ENCODE measurements at regions of chr19 and their contacts with region 1.

Region 1: GRCh38 chr19:15748239-15748638 is 10.5 kb downstream of the OR10H3 start:
- DNase-seq: no peak
- H3K4me3 ChIP-seq: no peak overlapping the region
- H3K27ac ChIP-seq: no peak overlapping the region
- H3K4me1 ChIP-seq: no peaks in the 10 kb centered on the region
- H3K27me3 ChIP-seq: peaks cover 52% of the 10 kb centered on the region
- CTCF ChIP-seq: no peak
- EP300 ChIP-seq: no peak
- POLR2A ChIP-seq: no peak

Region 2: DNA sequence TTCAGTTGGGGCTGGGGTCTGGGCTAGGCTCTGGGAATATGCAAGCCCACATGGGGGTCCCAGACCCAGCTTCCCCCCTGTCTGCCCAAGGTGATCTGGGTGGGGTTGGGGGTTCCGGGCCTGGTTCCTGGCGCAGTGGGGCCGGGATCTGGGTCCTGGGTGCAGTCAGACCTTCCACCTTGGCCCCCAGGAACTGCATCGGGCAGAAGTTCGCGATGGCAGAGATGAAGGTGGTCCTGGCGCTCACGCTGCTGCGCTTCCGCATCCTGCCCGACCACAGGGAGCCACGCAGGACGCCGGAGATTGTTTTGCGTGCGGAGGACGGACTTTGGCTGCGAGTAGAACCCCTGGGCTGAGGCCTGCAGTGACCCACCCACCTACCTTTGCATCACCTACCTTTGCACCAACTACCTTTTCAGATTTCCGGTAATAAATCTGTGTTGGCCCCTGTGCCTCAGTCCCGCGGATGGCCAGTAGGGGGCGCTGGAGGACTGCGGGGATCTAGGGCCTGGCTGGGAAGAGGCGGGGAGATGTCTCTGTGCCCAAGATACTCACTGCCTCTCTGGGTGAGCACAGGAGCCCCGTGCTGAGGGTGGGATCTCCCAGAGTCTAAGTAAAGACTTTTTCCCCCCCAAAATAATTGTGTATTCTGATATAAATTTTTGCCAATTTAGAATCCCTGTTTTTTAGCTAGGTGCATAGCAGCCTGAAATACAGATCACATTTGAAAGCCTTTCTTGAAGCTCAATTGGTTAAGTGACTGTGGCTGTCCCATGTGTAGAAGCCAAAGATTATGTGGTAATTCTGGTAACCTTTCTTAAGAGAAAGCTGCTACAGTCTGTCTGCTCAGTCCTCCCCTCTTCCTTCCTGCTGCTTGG is 119.0 kb before region 1 on chr19:
- in situ Hi-C with region 1: no loop called
- intact Hi-C with region 1: no loop called
- DNase-seq: peak; percentile 92
- H3K4me3 ChIP-seq: peak overlapping the region in 1 of 4 donors; percentile 6
- H3K27ac ChIP-seq: no peak overlapping the region
- H3K4me1 ChIP-seq: peaks cover 0 to 4% (median 0%) of the 10 kb centered on the region in 4 donors
- H3K27me3 ChIP-seq: peaks cover 4% of the 10 kb centered on the region
- CTCF ChIP-seq: peak; percentile 97 to 99 (median 99)
- EP300 ChIP-seq: no peak
- POLR2A ChIP-seq: no peak

Region 3: DNA sequence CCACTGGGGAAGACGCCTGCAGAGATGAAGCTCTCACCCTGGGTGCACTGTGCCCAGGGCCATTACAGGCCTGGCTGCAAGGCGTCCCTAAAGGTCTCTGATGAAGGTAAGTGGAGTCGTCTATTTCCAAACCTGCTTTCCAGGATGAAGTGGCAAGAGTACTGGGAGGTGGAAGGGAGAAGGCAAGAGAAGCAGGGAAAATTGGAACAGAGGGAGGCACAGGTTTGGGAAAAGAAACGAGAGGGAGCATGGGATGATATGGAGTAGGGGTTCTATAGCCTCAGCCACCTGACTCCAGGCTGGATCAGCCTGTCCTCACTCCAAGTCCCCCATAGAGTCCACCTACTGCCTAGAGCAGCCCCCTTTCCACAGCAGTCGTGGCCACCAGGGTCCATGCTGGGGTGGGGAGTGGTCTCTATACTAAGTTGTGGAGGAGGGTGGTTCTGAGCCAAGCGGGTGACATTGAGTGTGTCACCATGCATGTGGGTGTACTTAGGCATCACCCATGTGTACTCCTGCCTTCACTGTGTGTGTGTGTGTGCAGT is 39.4 kb after region 1 on chr19 and contains the start of gene OR10H5:
- in situ Hi-C with region 1: no loop called
- intact Hi-C with region 1: loop called (anchors 1 kb)
- DNase-seq: no peak
- H3K4me3 ChIP-seq: no peak within 1 kb of the TSS
- H3K27ac ChIP-seq: peak within 1 kb of the TSS in 3 of 4 donors; percentile 5 to 21 (median 8)
- H3K4me1 ChIP-seq: peaks cover 0 to 15% (median 1%) of the 10 kb centered on the region in 4 donors
- H3K27me3 ChIP-seq: no peaks in the 10 kb centered on the region
- CTCF ChIP-seq: no peak
- EP300 ChIP-seq: no peak
- POLR2A ChIP-seq: no peak
- total RNA-seq, gene OR10H5: not detected

Region 4: DNA sequence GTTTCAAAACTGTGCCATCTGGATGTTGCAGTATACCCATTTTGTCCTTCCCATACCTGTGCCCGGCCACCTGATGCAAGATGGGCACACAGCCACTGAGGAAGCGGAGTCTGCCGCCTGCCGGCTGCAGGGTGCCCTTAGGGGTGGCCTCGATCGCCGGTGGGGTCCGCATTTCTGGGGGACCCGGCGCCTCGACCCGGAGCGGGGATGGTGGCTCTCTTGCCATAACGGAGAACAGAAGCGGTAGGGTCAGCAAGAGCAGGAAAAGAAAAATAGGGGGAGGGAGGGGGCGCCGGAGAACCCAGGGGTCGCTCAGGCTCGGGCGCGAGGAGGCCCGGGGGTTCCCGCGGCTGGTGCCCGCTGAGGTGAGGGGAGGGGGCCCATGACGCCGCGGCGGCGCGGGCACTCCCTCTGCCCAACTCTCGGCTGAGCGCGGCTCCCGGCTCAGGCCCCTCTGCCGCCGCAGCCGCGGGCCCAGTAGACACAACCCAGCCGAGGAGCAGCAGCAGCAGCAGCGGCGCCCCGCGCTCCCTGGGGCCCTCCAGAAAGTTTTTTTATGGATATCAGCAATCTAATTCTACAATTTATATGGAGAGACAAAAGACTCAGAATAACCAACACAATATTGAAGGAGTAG is 163.5 kb after region 1 on chr19:
- in situ Hi-C with region 1: no loop called
- intact Hi-C with region 1: no loop called
- DNase-seq: no peak
- H3K4me3 ChIP-seq: no peak overlapping the region
- H3K27ac ChIP-seq: no peak overlapping the region
- H3K4me1 ChIP-seq: no peaks in the 10 kb centered on the region
- H3K27me3 ChIP-seq: peaks cover 54% of the 10 kb centered on the region
- CTCF ChIP-seq: no peak
- EP300 ChIP-seq: no peak
- POLR2A ChIP-seq: no peak